Activated CD4-positive, alpha-beta memory T cell treated with anti-CD3 and anti-CD28 coated beads, Interleukin-2, amount 10 ng/mL, durations not matched to agents 7 days and 5 days (primary cell): ENCODE measurements at regions of chr6 and their contacts with region 1.

Region 1: GRCh38 chr6:127516666-127517273 is 2.4 kb downstream of the MTCL3 start:
- DNase-seq: peak; percentile 68
- H3K4me3 Mint-ChIP-seq: peak overlapping the region; percentile 85
- H3K27ac Mint-ChIP-seq: peak overlapping the region; percentile 83
- H3K4me1 Mint-ChIP-seq: peaks cover 50% of the 10 kb centered on the region
- H3K27me3 Mint-ChIP-seq: peaks cover 8% of the 10 kb centered on the region

Region 2: GRCh38 chr6:127266178-127266891 is 250.4 kb before region 1 on chr6 and contains the start of gene RNF146:
- CTCF ChIA-PET with region 1: interaction called, 27 read pairs
- POLR2A ChIA-PET with region 1: interaction called, 16 read pairs
- DNase-seq: peak; percentile 76
- H3K4me3 Mint-ChIP-seq: peak within 1 kb of the TSS; percentile 98
- H3K27ac Mint-ChIP-seq: peak within 1 kb of the TSS; percentile 100
- H3K4me1 Mint-ChIP-seq: peaks cover 34% of the 10 kb centered on the region
- H3K27me3 Mint-ChIP-seq: peaks cover 4% of the 10 kb centered on the region
- total RNA-seq, gene RNF146: 27.9 to 30.5 TPM

Region 3: DNA sequence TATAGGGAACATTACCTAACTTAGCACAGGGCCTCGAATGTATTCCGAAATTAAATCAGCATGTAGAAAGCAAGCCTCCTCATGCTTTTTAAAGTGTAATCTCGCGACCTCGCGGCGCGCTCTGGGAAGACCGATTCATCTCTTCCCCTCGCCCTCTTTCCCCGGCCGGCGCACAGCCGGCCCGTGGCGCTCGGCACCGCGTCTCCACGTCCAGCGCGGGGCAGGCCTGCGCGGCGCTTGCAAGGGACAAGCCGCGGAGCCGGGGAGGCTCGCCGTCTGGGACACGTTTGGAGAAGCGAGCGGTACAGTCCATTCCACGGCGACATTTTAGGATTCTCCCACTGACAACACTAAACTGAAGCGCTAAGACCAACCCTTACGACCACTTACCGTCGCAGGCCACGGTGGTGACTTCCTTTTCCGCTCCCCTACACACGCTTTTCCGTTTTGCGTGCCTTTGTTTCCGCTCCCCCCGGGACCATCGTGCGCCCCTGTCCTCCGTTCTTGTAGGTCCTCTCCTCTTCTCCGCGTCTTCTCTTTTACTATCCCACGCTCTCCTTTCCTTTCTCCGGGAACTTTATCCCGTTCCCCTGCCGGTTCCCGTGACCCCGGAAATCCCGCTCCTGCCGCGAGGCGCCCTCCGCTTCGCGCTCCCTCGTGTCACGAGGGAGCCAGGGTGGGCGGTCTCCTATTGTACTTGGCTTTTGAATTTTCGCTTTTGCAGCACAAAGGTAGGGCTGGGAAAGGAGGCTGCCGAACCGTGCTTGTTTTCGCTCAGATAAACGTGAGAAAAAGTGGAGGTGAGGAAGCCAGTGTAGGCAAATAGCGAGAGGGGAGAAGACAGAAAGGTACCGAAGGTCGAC is 173.6 kb before region 1 on chr6 and contains the start of gene ECHDC1:
- CTCF ChIA-PET with region 1: interaction called, 7 read pairs
- POLR2A ChIA-PET with region 1: interaction called, 15 read pairs
- DNase-seq: peak; percentile 74
- H3K4me3 Mint-ChIP-seq: no peak within 1 kb of the TSS
- H3K27ac Mint-ChIP-seq: no peak within 1 kb of the TSS
- H3K4me1 Mint-ChIP-seq: peaks cover 14% of the 10 kb centered on the region
- H3K27me3 Mint-ChIP-seq: no peaks in the 10 kb centered on the region
- total RNA-seq, gene ECHDC1: 35.1 to 35.5 TPM

Region 4: GRCh38 chr6:127464881-127465459 is 51.8 kb before region 1 on chr6:
- CTCF ChIA-PET with region 1: interaction called, 31 read pairs
- POLR2A ChIA-PET with region 1: interaction called, 5 read pairs
- DNase-seq: peak; percentile 70
- H3K4me3 Mint-ChIP-seq: no peak overlapping the region
- H3K27ac Mint-ChIP-seq: no peak overlapping the region
- H3K4me1 Mint-ChIP-seq: peaks cover 15% of the 10 kb centered on the region
- H3K27me3 Mint-ChIP-seq: no peaks in the 10 kb centered on the region

Region 5: DNA sequence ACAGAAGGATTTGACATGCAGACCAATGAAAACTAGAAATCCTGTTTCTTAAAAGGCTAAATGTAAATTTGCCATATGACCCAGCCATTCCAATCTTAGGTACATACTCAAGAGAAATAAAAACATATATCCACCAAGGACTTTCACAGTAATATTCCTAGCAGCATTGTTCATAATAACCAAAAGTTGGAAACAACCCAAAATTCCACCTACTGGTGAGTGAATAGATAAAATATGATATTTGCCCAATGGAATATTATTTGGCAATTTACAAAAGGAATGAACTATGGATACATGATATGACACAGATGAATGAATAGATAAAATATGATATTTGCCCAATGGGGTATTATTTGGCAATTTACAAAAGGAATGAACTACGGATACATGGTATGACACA is 20.3 kb before region 1 on chr6:
- CTCF ChIA-PET with region 1: interaction called, 61 read pairs
- POLR2A ChIA-PET with region 1: interaction called, 19 read pairs
- DNase-seq: no peak
- H3K4me3 Mint-ChIP-seq: no peak overlapping the region
- H3K27ac Mint-ChIP-seq: no peak overlapping the region
- H3K4me1 Mint-ChIP-seq: peaks cover 10% of the 10 kb centered on the region
- H3K27me3 Mint-ChIP-seq: no peaks in the 10 kb centered on the region

Region 6: GRCh38 chr6:127533011-127533410 is 16.2 kb after region 1 on chr6:
- CTCF ChIA-PET with region 1: interaction called, 76 read pairs
- POLR2A ChIA-PET with region 1: interaction called, 6 read pairs
- DNase-seq: no peak
- H3K4me3 Mint-ChIP-seq: no peak overlapping the region
- H3K27ac Mint-ChIP-seq: no peak overlapping the region
- H3K4me1 Mint-ChIP-seq: no peaks in the 10 kb centered on the region
- H3K27me3 Mint-ChIP-seq: peaks cover 32% of the 10 kb centered on the region

Region 7: GRCh38 chr6:127547904-127548649 is 31.3 kb after region 1 on chr6:
- CTCF ChIA-PET with region 1: interaction called, 10 read pairs
- POLR2A ChIA-PET with region 1: no interaction called
- DNase-seq: no peak
- H3K4me3 Mint-ChIP-seq: no peak overlapping the region
- H3K27ac Mint-ChIP-seq: no peak overlapping the region
- H3K4me1 Mint-ChIP-seq: no peaks in the 10 kb centered on the region
- H3K27me3 Mint-ChIP-seq: peaks cover 5% of the 10 kb centered on the region

Region 8: GRCh38 chr6:127630800-127631199 is 114.0 kb after region 1 on chr6:
- CTCF ChIA-PET with region 1: no interaction called
- POLR2A ChIA-PET with region 1: no interaction called
- DNase-seq: no peak
- H3K4me3 Mint-ChIP-seq: no peak overlapping the region
- H3K27ac Mint-ChIP-seq: no peak overlapping the region
- H3K4me1 Mint-ChIP-seq: no peaks in the 10 kb centered on the region
- H3K27me3 Mint-ChIP-seq: no peaks in the 10 kb centered on the region